Sciatic nerve (tissue), 2 donors: ENCODE measurements at regions of chr13 and their contacts with region 1.

Region 1: DNA sequence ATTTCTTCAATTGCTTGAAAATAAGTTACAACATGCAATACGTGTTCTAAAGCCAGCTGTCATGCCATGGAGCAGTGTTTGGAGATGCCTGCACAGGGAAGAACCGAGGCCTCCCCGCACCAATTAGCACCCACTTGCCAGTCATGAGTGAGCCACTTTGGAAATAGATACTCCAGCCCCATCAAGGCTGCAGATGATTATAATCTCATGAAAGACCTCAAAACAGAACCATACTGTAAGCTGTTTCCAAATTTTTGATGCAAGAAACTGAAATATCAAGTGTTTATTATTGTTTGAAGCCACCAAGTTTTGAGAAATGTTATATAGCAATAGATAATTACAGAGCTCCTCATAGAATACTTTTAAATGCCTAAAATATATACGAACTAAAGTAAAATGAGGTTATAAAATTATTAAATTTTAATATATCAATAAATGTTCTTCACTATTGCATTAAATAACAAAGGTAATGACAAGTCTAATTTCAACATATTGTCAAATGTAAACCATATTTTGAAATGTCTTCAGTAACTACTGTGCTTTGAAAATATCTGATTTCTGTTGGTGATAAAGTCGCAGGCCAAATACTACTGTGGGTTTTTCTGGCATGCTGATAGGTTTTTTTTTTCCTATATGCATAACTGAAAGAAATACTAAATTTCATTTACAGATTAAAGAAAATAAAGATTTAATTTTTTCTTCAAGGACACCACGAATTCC is 43.0 kb downstream of the DIAPH3 start:
- DNase-seq: no peak
- ATAC-seq: no peak

Region 2: DNA sequence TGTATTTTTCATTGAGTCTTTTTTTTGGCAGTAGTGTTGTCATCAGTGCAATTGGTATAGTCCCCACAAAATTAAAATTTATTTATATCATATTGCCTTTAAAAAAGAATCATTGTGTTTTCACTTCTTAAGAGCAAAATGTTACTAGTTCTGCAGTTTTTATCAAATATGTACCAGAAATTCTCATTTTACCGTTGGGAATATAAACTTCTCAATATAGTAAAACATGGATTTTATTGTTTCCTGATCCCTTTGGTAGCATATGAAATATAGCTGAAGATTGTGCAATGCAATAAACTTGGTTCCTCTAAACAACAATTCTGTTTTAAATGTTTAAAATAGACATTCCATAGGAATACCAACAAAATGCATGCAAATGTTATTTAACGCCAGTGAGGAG is 1601.3 kb after region 1 on chr13:
- intact Hi-C with region 1: loop called (anchors 5 kb)
- DNase-seq: no peak
- ATAC-seq: no peak